GM12878 (cell line): ENCODE measurements at regions of chr10 and their contacts with region 1.

Region 1: GRCh38 chr10:26407406-26408279 is 30.5 kb upstream of the APBB1IP start:
- DNase-seq: no peak
- ATAC-seq: peak; percentile 21; the same call in 2 of the 3 replicates
- H3K4me3 ChIP-seq: no peak overlapping the region
- H3K27ac ChIP-seq: no peak overlapping the region
- H3K4me1 ChIP-seq: peaks cover 19% of the 10 kb centered on the region
- H3K27me3 ChIP-seq: no peaks in the 10 kb centered on the region
- CTCF ChIP-seq: no peak
- EP300 ChIP-seq: no peak
- POLR2A ChIP-seq: no peak
- RAD21 ChIP-seq: no peak

Region 2: DNA sequence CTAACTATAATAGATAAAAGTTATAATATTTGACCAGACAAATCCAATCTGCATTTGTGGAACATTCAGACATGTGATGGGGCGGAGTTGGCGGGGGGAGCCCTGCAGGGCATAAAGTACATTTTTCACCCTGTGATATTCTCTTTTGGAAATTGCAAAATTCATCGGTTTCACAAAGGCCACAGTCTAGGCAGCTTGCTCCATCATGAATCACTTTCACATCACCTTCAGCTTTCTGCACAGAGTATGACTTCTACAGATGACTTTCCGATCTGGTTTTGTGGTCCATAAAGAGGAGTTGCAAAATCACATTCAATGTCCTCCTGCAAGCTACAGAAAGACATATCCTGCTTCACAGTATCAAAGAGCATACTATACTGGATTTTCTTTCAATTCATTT is 20.9 kb before region 1 on chr10:
- CTCF ChIA-PET with region 1: interaction called, 3 read pairs
- POLR2A ChIA-PET with region 1: no interaction called
- RAD21 ChIA-PET with region 1: no interaction called
- SMC1A ChIA-PET with region 1: interaction called, 13 read pairs
- in situ Hi-C with region 1: no loop called
- intact Hi-C with region 1: no loop called
- DNase-seq: no peak
- ATAC-seq: peak; percentile 58; the same call in 2 of the 3 replicates
- H3K4me3 ChIP-seq: no peak overlapping the region
- H3K27ac ChIP-seq: no peak overlapping the region
- H3K4me1 ChIP-seq: peaks cover 19% of the 10 kb centered on the region
- H3K27me3 ChIP-seq: no peaks in the 10 kb centered on the region
- CTCF ChIP-seq: no peak
- EP300 ChIP-seq: no peak
- POLR2A ChIP-seq: no peak
- RAD21 ChIP-seq: no peak

Region 3: GRCh38 chr10:26430641-26431164 is 23.1 kb after region 1 on chr10:
- CTCF ChIA-PET with region 1: interaction called, 4 read pairs
- POLR2A ChIA-PET with region 1: interaction called, 8 read pairs
- RAD21 ChIA-PET with region 1: interaction called, 17 read pairs
- SMC1A ChIA-PET with region 1: interaction called, 69 read pairs
- in situ Hi-C with region 1: no loop called
- intact Hi-C with region 1: no loop called
- DNase-seq: peak; percentile 91
- ATAC-seq: peak; percentile 92
- H3K4me3 ChIP-seq: peak overlapping the region; percentile 44
- H3K27ac ChIP-seq: peak overlapping the region; percentile 94
- H3K4me1 ChIP-seq: peaks cover 19% of the 10 kb centered on the region
- H3K27me3 ChIP-seq: no peaks in the 10 kb centered on the region
- CTCF ChIP-seq: no peak
- EP300 ChIP-seq: peak; percentile 38 to 60; a peak in 2 of 4 replicates
- POLR2A ChIP-seq: no peak
- RAD21 ChIP-seq: no peak

Region 4: DNA sequence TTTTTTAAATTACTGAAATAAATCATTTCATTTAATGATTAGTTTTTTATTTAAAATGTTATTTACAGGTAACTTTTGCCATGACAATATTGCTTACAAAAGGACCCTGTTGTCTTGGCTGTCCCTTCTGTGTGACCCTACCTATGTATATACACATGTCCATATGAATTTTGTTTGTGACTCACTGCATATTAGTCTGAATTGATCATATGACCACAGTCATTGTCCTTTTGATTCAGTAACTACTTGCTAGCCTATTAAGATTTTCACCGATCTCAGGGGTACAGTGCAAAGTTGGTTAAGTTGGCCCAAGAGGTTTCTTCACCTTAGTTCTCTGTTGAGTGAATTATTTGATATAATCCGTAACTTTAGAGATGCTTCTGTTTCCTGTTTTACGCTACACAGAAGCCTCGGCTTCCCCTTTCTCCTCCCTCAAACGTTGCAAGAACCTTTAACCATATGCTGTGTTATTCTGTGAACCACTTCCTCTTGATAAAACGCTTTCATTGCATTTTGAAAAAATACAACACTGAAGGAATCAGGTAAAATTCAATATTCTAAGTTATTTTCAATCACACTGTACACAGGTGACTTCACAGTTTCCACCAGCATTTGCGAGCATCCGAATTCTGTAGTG is 74.4 kb after region 1 on chr10:
- CTCF ChIA-PET with region 1: interaction called, 4 read pairs
- POLR2A ChIA-PET with region 1: interaction called, 3 read pairs
- RAD21 ChIA-PET with region 1: interaction called, 3 read pairs
- SMC1A ChIA-PET with region 1: interaction called, 13 read pairs
- in situ Hi-C with region 1: no loop called
- intact Hi-C with region 1: no loop called
- DNase-seq: no peak
- ATAC-seq: peak; percentile 46
- H3K4me3 ChIP-seq: peak overlapping the region; percentile 54; the same call in 1 of the 2 replicates
- H3K27ac ChIP-seq: peak overlapping the region; percentile 81
- H3K4me1 ChIP-seq: peaks cover 41% of the 10 kb centered on the region
- H3K27me3 ChIP-seq: no peaks in the 10 kb centered on the region
- CTCF ChIP-seq: no peak
- EP300 ChIP-seq: 0 out of 4 replicates have a peak, but pooled peaks of 1 of the 2 experiments have one; percentile 18
- POLR2A ChIP-seq: no peak
- RAD21 ChIP-seq: no peak

Region 5: GRCh38 chr10:26556748-26557640 is 149.4 kb after region 1 on chr10:
- CTCF ChIA-PET with region 1: interaction called, 8 read pairs
- POLR2A ChIA-PET with region 1: no interaction called
- RAD21 ChIA-PET with region 1: interaction called, 11 read pairs
- SMC1A ChIA-PET with region 1: interaction called, 3 read pairs
- in situ Hi-C with region 1: no loop called
- intact Hi-C with region 1: no loop called
- DNase-seq: no peak
- ATAC-seq: peak; percentile 72
- H3K4me3 ChIP-seq: no peak overlapping the region
- H3K27ac ChIP-seq: no peak overlapping the region
- H3K4me1 ChIP-seq: no peaks in the 10 kb centered on the region
- H3K27me3 ChIP-seq: no peaks in the 10 kb centered on the region
- CTCF ChIP-seq: peak; percentile 87 to 96 (median 88)
- EP300 ChIP-seq: no peak
- POLR2A ChIP-seq: no peak
- RAD21 ChIP-seq: peak; percentile 99